CD4-positive, alpha-beta memory T cell (primary cell): ENCODE measurements at regions of chr1 and their contacts with region 1.

Region 1: GRCh38 chr1:28505406-28506187 is at the start of gene RCC1:
- DNase-seq: peak; percentile 94 to 98 (median 97)
- H3K4me3 ChIP-seq: peak within 1 kb of the TSS; percentile 76 to 96
- H3K4me3 Mint-ChIP-seq: peak within 1 kb of the TSS; percentile 94 to 100 (median 98)
- H3K27ac ChIP-seq: peak within 1 kb of the TSS; percentile 66
- H3K27ac Mint-ChIP-seq: peak within 1 kb of the TSS; percentile 96 to 99 (median 98)
- H3K4me1 ChIP-seq: peaks cover 37% of the 10 kb centered on the region
- H3K4me1 Mint-ChIP-seq: peaks cover 29 to 53% (median 38%) of the 10 kb centered on the region in 4 donors
- H3K27me3 ChIP-seq: no peaks in the 10 kb centered on the region
- H3K27me3 Mint-ChIP-seq: no peaks in the 10 kb centered on the region
- total RNA-seq, gene RCC1: 16.7 to 18.4 TPM

Region 2: GRCh38 chr1:28369371-28370238 is 136.0 kb before region 1 on chr1 and contains the start of gene PHACTR4:
- CTCF ChIA-PET with region 1: interaction called, 3 read pairs
- POLR2A ChIA-PET with region 1: interaction called, 4 read pairs
- intact Hi-C with region 1: loop called (anchors 2 kb)
- DNase-seq: peak; percentile 67 to 83 (median 72)
- H3K4me3 ChIP-seq: peak within 1 kb of the TSS; percentile 63 to 87
- H3K4me3 Mint-ChIP-seq: peak within 1 kb of the TSS; percentile 94 to 97 (median 96)
- H3K27ac ChIP-seq: peak within 1 kb of the TSS; percentile 84
- H3K27ac Mint-ChIP-seq: peak within 1 kb of the TSS; percentile 91 to 97 (median 94)
- H3K4me1 ChIP-seq: peaks cover 36% of the 10 kb centered on the region
- H3K4me1 Mint-ChIP-seq: peaks cover 21 to 45% (median 34%) of the 10 kb centered on the region in 4 donors
- H3K27me3 ChIP-seq: no peaks in the 10 kb centered on the region
- H3K27me3 Mint-ChIP-seq: no peaks in the 10 kb centered on the region
- total RNA-seq, gene PHACTR4: 27.1 to 28.8 TPM

Region 3: DNA sequence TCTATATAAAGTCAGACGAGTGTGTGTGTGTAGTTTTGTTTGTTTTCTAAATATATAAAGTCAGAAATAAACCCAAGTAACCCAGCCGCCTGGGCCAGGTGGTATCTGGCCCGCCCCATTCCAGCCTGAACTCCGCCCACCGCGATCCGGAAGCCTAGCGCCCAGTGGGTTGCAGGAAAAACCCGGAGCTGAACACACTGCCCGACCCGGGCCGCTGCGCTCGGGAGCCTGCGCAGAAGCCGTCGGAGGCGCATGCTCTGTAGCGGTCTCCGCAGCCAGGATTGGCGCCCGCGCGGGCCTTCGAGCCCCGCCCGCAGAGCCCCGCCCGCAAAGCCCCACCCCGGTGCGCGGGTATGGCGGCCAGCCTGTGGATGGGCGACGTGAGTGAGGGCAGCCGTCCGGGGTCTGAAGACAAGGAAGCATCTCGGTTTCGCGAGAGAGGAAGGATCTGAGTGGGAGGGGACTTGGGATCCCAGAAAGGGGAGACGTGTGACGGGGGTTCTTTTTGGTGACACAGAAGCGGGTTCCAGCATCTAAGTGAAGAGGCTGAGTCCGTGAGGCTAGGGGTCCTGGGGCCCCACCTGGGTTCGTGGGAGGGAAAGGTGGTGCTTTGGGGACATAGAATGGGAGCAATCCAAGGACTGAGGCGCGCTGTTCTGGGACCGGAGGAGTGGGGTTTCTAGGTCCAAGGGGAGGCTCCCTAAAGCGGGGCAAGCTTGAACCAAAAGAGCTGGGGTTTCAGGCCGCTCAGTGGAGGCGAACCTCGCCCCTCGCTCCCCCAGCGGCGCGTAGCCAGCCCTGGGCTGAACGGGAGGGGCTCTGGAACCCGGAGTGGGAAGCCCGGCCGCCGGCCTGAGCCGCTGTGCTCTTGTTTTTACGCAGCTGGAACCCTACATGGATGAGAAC is 47.4 kb after region 1 on chr1 and contains the start of gene TRNAU1AP:
- CTCF ChIA-PET with region 1: no interaction called
- POLR2A ChIA-PET with region 1: interaction called, 54 read pairs
- intact Hi-C with region 1: loop called (anchors 1 kb)
- DNase-seq: peak; percentile 96 to 98 (median 97)
- H3K4me3 ChIP-seq: peak within 1 kb of the TSS; percentile 89 to 96
- H3K4me3 Mint-ChIP-seq: peak within 1 kb of the TSS; percentile 98 to 100 (median 99)
- H3K27ac ChIP-seq: peak within 1 kb of the TSS; percentile 80
- H3K27ac Mint-ChIP-seq: peak within 1 kb of the TSS; percentile 96 to 99 (median 98)
- H3K4me1 ChIP-seq: peaks cover 21% of the 10 kb centered on the region
- H3K4me1 Mint-ChIP-seq: peaks cover 11 to 35% (median 19%) of the 10 kb centered on the region in 4 donors
- H3K27me3 ChIP-seq: no peaks in the 10 kb centered on the region
- H3K27me3 Mint-ChIP-seq: no peaks in the 10 kb centered on the region
- total RNA-seq, gene TRNAU1AP: 46.3 to 46.7 TPM

Region 4: GRCh38 chr1:28648474-28649198 is 143.0 kb after region 1 on chr1 and contains the start of gene RNU11:
- CTCF ChIA-PET with region 1: interaction called, 3 read pairs
- POLR2A ChIA-PET with region 1: interaction called, 48 read pairs
- intact Hi-C with region 1: loop called (anchors 1 kb)
- DNase-seq: peak; percentile 93 to 95 (median 95)
- H3K4me3 ChIP-seq: peak within 1 kb of the TSS; percentile 55 to 91
- H3K4me3 Mint-ChIP-seq: peak within 1 kb of the TSS; percentile 84 to 94 (median 90)
- H3K27ac ChIP-seq: peak within 1 kb of the TSS; percentile 96
- H3K27ac Mint-ChIP-seq: peak within 1 kb of the TSS; percentile 99 to 100 (median 99)
- H3K4me1 ChIP-seq: peaks cover 31% of the 10 kb centered on the region
- H3K4me1 Mint-ChIP-seq: peaks cover 15 to 36% (median 25%) of the 10 kb centered on the region in 4 donors
- H3K27me3 ChIP-seq: no peaks in the 10 kb centered on the region
- H3K27me3 Mint-ChIP-seq: no peaks in the 10 kb centered on the region
- total RNA-seq, gene RNU11: not detected

Region 5: DNA sequence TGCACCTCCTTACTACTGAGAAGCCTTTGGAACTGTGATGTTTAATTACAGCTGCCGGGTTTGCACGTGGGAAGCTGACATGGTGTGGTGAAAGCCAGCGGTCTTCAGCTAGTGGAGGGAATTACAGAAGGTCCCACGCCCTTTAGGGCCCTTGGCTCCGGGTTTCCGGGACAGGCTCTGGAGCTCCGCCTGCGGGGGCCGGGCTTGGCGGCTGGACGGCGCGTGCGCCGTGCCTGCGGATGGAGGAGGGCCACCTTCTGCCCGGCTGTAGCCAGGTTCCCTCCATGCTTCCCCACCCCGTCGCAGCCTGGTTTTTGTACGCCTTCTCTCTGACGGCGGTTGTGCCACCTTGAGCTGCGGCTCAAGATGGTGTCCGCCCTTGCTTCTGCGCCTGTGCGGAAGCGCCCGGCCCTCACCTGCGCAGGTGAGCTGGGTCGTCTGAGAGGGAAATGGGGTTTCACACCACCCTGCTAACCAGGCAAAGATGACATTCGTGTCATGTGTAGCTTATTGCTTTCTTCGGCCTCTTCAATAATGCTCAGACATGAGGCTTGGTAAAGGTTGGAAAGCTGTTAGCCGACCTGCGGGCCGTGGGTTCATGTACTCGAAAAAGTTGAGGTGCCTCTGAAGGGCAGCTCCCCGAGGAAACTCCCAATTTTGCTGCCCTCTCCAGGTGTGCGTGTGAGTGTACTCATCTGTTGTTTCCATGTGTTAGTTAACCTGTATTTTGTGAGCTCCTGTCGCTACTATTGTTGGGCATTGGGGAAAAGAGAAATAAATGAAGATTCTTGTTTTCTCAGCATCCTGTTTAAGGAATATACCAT is 269.7 kb after region 1 on chr1:
- CTCF ChIA-PET with region 1: no interaction called
- POLR2A ChIA-PET with region 1: interaction called, 11 read pairs
- intact Hi-C with region 1: no loop called
- DNase-seq: peak; percentile 66 to 81 (median 74)
- H3K4me3 ChIP-seq: peak overlapping the region; percentile 8 to 64
- H3K4me3 Mint-ChIP-seq: peak overlapping the region; percentile 81 to 91 (median 85)
- H3K27ac ChIP-seq: peak overlapping the region; percentile 28
- H3K27ac Mint-ChIP-seq: peak overlapping the region; percentile 70 to 93 (median 87)
- H3K4me1 ChIP-seq: peaks cover 6% of the 10 kb centered on the region
- H3K4me1 Mint-ChIP-seq: peaks cover 5 to 13% (median 9%) of the 10 kb centered on the region in 4 donors
- H3K27me3 ChIP-seq: no peaks in the 10 kb centered on the region
- H3K27me3 Mint-ChIP-seq: no peaks in the 10 kb centered on the region